Left cardiac atrium (tissue), 4 donors: ENCODE measurements at regions of chr15 and their contacts with region 1.

Region 1: GRCh38 chr15:101167753-101168463 is 83.9 kb downstream of the CHSY1 start:
- DNase-seq: peak; percentile 91
- ATAC-seq: peak; percentile 76 to 77

Region 2: GRCh38 chr15:101115786-101116680 is 51.9 kb before region 1 on chr15:
- intact Hi-C with region 1: no loop called
- DNase-seq: peak; percentile 62
- ATAC-seq: peak; percentile 74 to 83

Region 3: GRCh38 chr15:101127506-101128076 is 40.3 kb before region 1 on chr15:
- intact Hi-C with region 1: loop called in 1 of 2 experiments (anchors 5 kb)
- DNase-seq: peak; percentile 89
- ATAC-seq: peak; percentile 94 to 95

Region 4: GRCh38 chr15:101138913-101139880 is 28.7 kb before region 1 on chr15:
- intact Hi-C with region 1: no loop called
- DNase-seq: no peak
- ATAC-seq: no peak

Region 5: DNA sequence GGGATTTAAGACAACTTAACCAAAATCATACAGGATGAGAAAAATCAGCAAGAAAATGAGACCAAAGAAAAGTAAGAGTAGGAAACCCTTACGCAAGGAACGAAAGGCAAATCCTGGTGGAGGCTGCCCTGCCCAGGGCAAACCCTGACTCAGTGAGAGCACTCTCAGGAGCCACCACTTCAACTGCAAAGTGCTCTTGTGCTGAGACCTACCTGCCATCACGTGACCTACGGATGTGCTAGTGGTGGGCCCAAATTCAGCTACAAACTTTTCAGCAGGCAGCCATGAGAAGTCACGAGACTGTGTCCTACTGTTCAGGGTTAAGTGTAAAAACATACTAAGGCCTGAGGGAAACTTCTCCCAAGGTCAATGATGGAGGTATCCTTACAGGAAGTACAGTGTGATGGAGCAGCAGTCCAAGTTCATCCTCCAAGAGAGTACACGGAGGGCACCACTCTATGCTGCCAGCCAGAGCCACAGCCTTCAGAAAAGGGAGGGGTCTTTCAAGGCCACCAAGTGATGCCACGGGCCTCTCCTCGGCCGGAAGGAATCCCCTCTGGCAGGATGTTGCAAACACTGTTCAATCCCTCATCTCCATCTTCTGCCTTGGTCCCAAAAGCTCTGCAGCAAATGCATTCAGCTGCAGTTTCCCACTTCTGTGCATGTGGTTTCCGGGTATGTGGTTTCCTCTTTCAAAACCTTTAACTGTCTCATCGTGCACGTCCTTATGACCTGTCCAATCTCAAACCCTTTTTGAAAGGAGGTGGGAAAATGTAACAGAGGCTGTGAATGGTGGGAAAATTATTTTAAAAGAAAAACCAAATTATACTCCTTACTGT is 74.5 kb after region 1 on chr15:
- intact Hi-C with region 1: loop called in 1 of 2 experiments (anchors 10 kb)
- DNase-seq: no peak
- ATAC-seq: peak; percentile 44 to 48